Dorsolateral prefrontal cortex (tissue), 120 donors: ENCODE measurements at regions of chr12 and their contacts with region 1.

Region 1: GRCh38 chr12:57005980-57006808 is at the start of gene ZBTB39:
- DNase-seq: peak in 6 of 10 donors; percentile 28 to 72 (median 48)
- H3K4me3 ChIP-seq: peak within 1 kb of the TSS; percentile 47 to 94 (median 83)
- H3K27ac ChIP-seq: peak within 1 kb of the TSS in 51 of 59 donors; percentile 48 to 89 (median 76)
- H3K27me3 ChIP-seq: no peaks in the 10 kb centered on the region
- CTCF ChIP-seq: peak; percentile 31 to 77 (median 66)
- total RNA-seq, gene ZBTB39: 4.7 to 10.1 (median 7.0) TPM

Region 2: DNA sequence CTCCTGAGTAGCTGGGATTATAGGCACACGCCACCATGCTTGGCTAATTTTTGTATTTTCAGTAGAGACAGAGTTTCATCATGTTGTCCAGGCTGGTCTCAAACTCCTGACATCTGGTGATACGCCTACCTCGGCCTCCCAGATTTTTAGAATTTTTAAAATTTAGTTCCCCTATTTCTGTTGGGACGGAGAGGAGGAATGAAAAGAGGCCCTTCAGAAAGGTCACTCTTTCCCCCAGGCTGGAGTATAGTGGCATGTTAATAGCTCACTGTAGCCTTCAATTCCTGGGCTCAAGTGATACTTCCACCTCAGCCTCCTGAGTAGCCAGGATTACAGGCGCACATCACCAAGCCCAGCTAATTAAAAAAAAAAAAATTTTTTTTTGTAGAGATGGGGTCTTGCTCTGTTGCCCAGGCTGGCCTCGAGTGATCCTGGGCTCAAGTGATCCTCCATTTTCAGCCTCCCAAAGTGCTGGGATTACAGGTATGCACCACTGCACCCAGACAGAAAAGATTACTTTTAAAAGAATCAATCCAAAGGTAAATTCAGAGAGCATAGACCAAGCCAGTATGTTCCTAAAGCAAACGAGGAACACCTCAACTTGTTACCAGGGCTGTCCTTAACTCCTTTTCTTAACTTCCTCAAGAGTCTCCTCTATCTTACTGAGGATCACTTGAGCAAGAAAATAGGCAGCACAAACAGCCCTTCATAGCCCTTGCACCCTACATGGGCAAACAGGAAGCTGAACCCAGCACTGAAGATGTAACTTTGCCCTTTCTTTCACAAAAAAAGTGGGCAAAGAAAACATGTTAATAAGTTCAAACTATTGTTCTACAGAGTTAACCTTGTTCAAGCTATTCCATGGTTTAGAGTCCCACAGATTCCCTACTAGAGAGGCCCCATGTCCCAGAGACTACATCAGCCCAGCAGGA is 717.5 kb before region 1 on chr12:
- intact Hi-C with region 1: no loop called
- DNase-seq: no peak
- H3K4me3 ChIP-seq: no peak overlapping the region
- H3K27ac ChIP-seq: peak overlapping the region in 1 of 59 donors; percentile 6
- H3K27me3 ChIP-seq: no peaks in the 10 kb centered on the region
- CTCF ChIP-seq: no peak

Region 3: GRCh38 chr12:56759263-56759908 is 246.8 kb before region 1 on chr12:
- intact Hi-C with region 1: loop called (anchors 5 kb)
- DNase-seq: no peak
- H3K4me3 ChIP-seq: no peak overlapping the region
- H3K27ac ChIP-seq: no peak overlapping the region
- H3K27me3 ChIP-seq: no peaks in the 10 kb centered on the region
- CTCF ChIP-seq: no peak

Region 4: GRCh38 chr12:56931474-56931978 is 74.7 kb before region 1 on chr12:
- intact Hi-C with region 1: no loop called
- DNase-seq: no peak
- H3K4me3 ChIP-seq: no peak overlapping the region
- H3K27ac ChIP-seq: peak overlapping the region in 1 of 59 donors; percentile 23
- H3K27me3 ChIP-seq: no peaks in the 10 kb centered on the region
- CTCF ChIP-seq: no peak

Region 5: GRCh38 chr12:57063991-57064685 is 57.9 kb after region 1 on chr12:
- intact Hi-C with region 1: loop called (anchors 5 kb)
- DNase-seq: no peak
- H3K4me3 ChIP-seq: peak overlapping the region in 2 of 59 donors; percentile 3 to 6
- H3K27ac ChIP-seq: peak overlapping the region in 10 of 59 donors; percentile 9 to 57 (median 30)
- H3K27me3 ChIP-seq: no peaks in the 10 kb centered on the region
- CTCF ChIP-seq: peak in 1 of 56 donors; percentile 11

Region 6: GRCh38 chr12:57112492-57113294 is 106.5 kb after region 1 on chr12:
- intact Hi-C with region 1: loop called (anchors 1 to 5 kb)
- DNase-seq: peak in 7 of 10 donors; percentile 68 to 85 (median 77)
- H3K4me3 ChIP-seq: peak overlapping the region in 52 of 59 donors; percentile 2 to 76 (median 60)
- H3K27ac ChIP-seq: peak overlapping the region in 53 of 59 donors; percentile 29 to 99 (median 93)
- H3K27me3 ChIP-seq: no peaks in the 10 kb centered on the region
- CTCF ChIP-seq: peak in 55 of 56 donors; percentile 39 to 97 (median 90)